Mammary epithelial cell (primary cell): ENCODE measurements at regions of chr5 and their contacts with region 1.

Region 1: GRCh38 chr5:173331956-173332479 is 3.8 kb upstream of the STC2 start:
- DNase-seq: peak; percentile 65
- H3K4me3 ChIP-seq: no peak overlapping the region
- H3K27ac ChIP-seq: no peak overlapping the region
- H3K4me1 ChIP-seq: peaks cover 29% of the 10 kb centered on the region
- H3K27me3 ChIP-seq: no peaks in the 10 kb centered on the region
- CTCF ChIP-seq: peak; percentile 84 to 94

Region 2: GRCh38 chr5:172984243-172984953 is 347.6 kb before region 1 on chr5:
- CTCF ChIA-PET with region 1: no interaction called
- dilution Hi-C with region 1: no loop called
- in situ Hi-C with region 1: no loop called
- intact Hi-C with region 1: loop called (anchors 2 kb)
- DNase-seq: peak; percentile 85
- H3K4me3 ChIP-seq: peak overlapping the region; percentile 58 to 92 (median 78)
- H3K27ac ChIP-seq: peak overlapping the region; percentile 91
- H3K4me1 ChIP-seq: peaks cover 11% of the 10 kb centered on the region
- H3K27me3 ChIP-seq: no peaks in the 10 kb centered on the region
- CTCF ChIP-seq: peak; percentile 43 to 72

Region 3: GRCh38 chr5:173057062-173057924 is 274.7 kb before region 1 on chr5:
- CTCF ChIA-PET with region 1: no interaction called
- dilution Hi-C with region 1: no loop called
- in situ Hi-C with region 1: no loop called
- intact Hi-C with region 1: loop called (anchors 5 kb)
- DNase-seq: peak; percentile 98
- H3K4me3 ChIP-seq: peak overlapping the region; percentile 72 to 95 (median 86)
- H3K27ac ChIP-seq: peak overlapping the region; percentile 92
- H3K4me1 ChIP-seq: peaks cover 8% of the 10 kb centered on the region
- H3K27me3 ChIP-seq: no peaks in the 10 kb centered on the region
- CTCF ChIP-seq: peak in 1 of 2 donors; percentile 26

Region 4: GRCh38 chr5:173163219-173163618 is 168.8 kb before region 1 on chr5:
- CTCF ChIA-PET with region 1: no interaction called
- dilution Hi-C with region 1: no loop called
- in situ Hi-C with region 1: no loop called
- intact Hi-C with region 1: loop called (anchors 1 kb)
- DNase-seq: no peak
- H3K4me3 ChIP-seq: no peak overlapping the region
- H3K27ac ChIP-seq: no peak overlapping the region
- H3K4me1 ChIP-seq: no peaks in the 10 kb centered on the region
- H3K27me3 ChIP-seq: no peaks in the 10 kb centered on the region
- CTCF ChIP-seq: no peak

Region 5: GRCh38 chr5:173451031-173451430 is 119.0 kb after region 1 on chr5:
- CTCF ChIA-PET with region 1: no interaction called
- dilution Hi-C with region 1: no loop called
- in situ Hi-C with region 1: no loop called
- intact Hi-C with region 1: loop called (anchors 1 kb)
- DNase-seq: no peak
- H3K4me3 ChIP-seq: no peak overlapping the region
- H3K27ac ChIP-seq: no peak overlapping the region
- H3K4me1 ChIP-seq: peaks cover 38% of the 10 kb centered on the region
- H3K27me3 ChIP-seq: no peaks in the 10 kb centered on the region
- CTCF ChIP-seq: peak; percentile 30 to 50

Region 6: GRCh38 chr5:173567574-173567973 is 235.6 kb after region 1 on chr5:
- CTCF ChIA-PET with region 1: interaction called, 27 read pairs
- dilution Hi-C with region 1: no loop called
- in situ Hi-C with region 1: no loop called
- intact Hi-C with region 1: loop called (anchors 2 kb)
- DNase-seq: peak; percentile 70
- H3K4me3 ChIP-seq: no peak overlapping the region
- H3K27ac ChIP-seq: peak overlapping the region; percentile 36
- H3K4me1 ChIP-seq: peaks cover 23% of the 10 kb centered on the region
- H3K27me3 ChIP-seq: no peaks in the 10 kb centered on the region
- CTCF ChIP-seq: no peak

Region 7: GRCh38 chr5:173615884-173616576 is 284.0 kb after region 1 on chr5:
- CTCF ChIA-PET with region 1: no interaction called
- dilution Hi-C with region 1: no loop called
- in situ Hi-C with region 1: no loop called
- intact Hi-C with region 1: loop called (anchors 1 kb)
- DNase-seq: peak; percentile 66
- H3K4me3 ChIP-seq: peak overlapping the region; percentile 46 to 88 (median 63)
- H3K27ac ChIP-seq: peak overlapping the region; percentile 73
- H3K4me1 ChIP-seq: peaks cover 16% of the 10 kb centered on the region
- H3K27me3 ChIP-seq: no peaks in the 10 kb centered on the region
- CTCF ChIP-seq: peak; percentile 65 to 80